Activated T-helper 2 cell treated with anti-CD3 and anti-CD28 coated beads, Interferon-gamma antibody, Interleukin-2, Interleukin-4, amounts not matched to agents 10 μg/mL and 5 μg/mL and 100 μg/mL, durations not matched to agents 14 hours and 24 hours and 36 hours (primary cell): ENCODE measurements at regions of chr3 and their contacts with region 1.

Region 1: GRCh38 chr3:151282921-151283320 is 4.6 kb upstream of the P2RY14 start:
- DNase-seq: no peak
- H3K4me3 Mint-ChIP-seq: no peak overlapping the region
- H3K27ac Mint-ChIP-seq: peak overlapping the region; percentile 19
- H3K4me1 Mint-ChIP-seq: peaks cover 47% of the 10 kb centered on the region
- H3K27me3 Mint-ChIP-seq: no peaks in the 10 kb centered on the region

Region 2: GRCh38 chr3:150925751-150926201 is 357.1 kb before region 1 on chr3:
- intact Hi-C with region 1: loop called (anchors 10 kb)
- DNase-seq: peak; percentile 41
- H3K4me3 Mint-ChIP-seq: peak overlapping the region; percentile 45
- H3K27ac Mint-ChIP-seq: no peak overlapping the region
- H3K4me1 Mint-ChIP-seq: no peaks in the 10 kb centered on the region
- H3K27me3 Mint-ChIP-seq: peaks cover 9% of the 10 kb centered on the region

Region 3: DNA sequence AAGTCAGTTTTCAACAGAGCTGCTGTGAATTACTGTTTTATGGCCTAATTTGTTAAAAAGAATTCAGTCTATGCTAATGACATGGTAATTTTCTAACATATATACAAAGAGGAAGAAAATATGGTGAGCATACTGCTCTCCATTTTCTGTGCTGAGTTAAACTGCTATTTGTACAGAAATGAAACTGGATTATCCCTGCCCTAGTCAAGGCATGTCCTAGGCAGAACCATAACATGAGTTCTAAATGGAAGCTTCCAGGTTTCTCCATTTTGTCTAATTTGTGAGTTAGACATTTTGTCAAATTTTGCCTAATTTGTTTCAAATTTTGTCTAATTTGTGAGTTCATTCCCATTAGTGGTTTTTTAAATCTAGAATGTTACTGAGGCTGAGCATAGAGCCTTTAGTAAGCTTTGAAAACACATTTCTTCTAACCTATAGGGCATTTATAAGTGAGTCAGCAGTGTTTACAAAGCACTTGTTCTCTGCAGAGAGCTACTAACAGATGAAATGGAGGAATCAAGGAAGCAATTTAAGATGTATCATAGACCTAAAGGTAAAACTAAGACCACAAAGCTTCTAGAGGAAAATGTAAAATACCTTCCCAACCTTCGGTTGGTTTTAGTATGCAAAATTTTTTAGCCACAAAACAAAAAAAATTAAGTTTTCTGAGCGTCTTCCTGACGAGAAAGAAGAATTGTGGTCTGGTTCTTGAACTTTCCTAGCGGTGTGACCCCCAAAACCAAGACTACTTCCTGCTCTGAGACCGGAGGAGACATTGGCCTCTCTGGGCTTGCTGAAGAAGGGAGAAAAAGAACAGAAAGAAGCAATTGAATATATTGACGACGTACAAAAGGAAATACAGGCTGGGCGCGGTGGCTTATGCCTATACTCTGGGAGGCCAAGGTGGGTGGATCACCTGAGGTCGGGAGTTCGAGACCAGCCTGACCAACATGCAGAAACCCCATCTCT is 14.4 kb before region 1 on chr3:
- intact Hi-C with region 1: loop called (anchors 2 kb)
- DNase-seq: peak; percentile 35
- H3K4me3 Mint-ChIP-seq: peak overlapping the region; percentile 7
- H3K27ac Mint-ChIP-seq: peak overlapping the region; percentile 83
- H3K4me1 Mint-ChIP-seq: peaks cover 38% of the 10 kb centered on the region
- H3K27me3 Mint-ChIP-seq: no peaks in the 10 kb centered on the region

Region 4: GRCh38 chr3:151316267-151316991 is 33.5 kb after region 1 on chr3 and contains the start of gene GPR87:
- intact Hi-C with region 1: loop called (anchors 1 kb)
- DNase-seq: no peak
- H3K4me3 Mint-ChIP-seq: peak within 1 kb of the TSS; percentile 55
- H3K27ac Mint-ChIP-seq: peak within 1 kb of the TSS; percentile 80
- H3K4me1 Mint-ChIP-seq: peaks cover 51% of the 10 kb centered on the region
- H3K27me3 Mint-ChIP-seq: no peaks in the 10 kb centered on the region
- total RNA-seq, gene GPR87: 1.1 and 1.2 TPM in 2 replicates